ENCODE measurements at regions of chr20 and their contacts with region 1.

Region 1: GRCh38 chr20:44586289-44586911 is 4.0 kb downstream of the PKIG start:
- DNase-seq: peak; percentile 10
- ATAC-seq: peak; percentile 39
- H3K4me3 Mint-ChIP-seq: no peak overlapping the region
- H3K27ac Mint-ChIP-seq: no peak overlapping the region
- H3K4me1 Mint-ChIP-seq: peaks cover 8% of the 10 kb centered on the region
- H3K27me3 Mint-ChIP-seq: no peaks in the 10 kb centered on the region
- CTCF ChIP-seq: no peak

Region 2: GRCh38 chr20:44153636-44154043 is 432.8 kb before region 1 on chr20:
- CTCF ChIA-PET with region 1: no interaction called
- POLR2A ChIA-PET with region 1: no interaction called
- intact Hi-C with region 1: no loop called
- DNase-seq: peak; percentile 8
- ATAC-seq: peak; percentile 64
- H3K4me3 Mint-ChIP-seq: no peak overlapping the region
- H3K27ac Mint-ChIP-seq: peak overlapping the region; percentile 35
- H3K4me1 Mint-ChIP-seq: peaks cover 12% of the 10 kb centered on the region
- H3K27me3 Mint-ChIP-seq: peaks cover 3% of the 10 kb centered on the region
- CTCF ChIP-seq: no peak

Region 3: GRCh38 chr20:44532259-44532980 is 54.0 kb before region 1 on chr20:
- CTCF ChIA-PET with region 1: no interaction called
- POLR2A ChIA-PET with region 1: no interaction called
- intact Hi-C with region 1: no loop called
- DNase-seq: no peak
- ATAC-seq: no peak
- H3K4me3 Mint-ChIP-seq: no peak overlapping the region
- H3K27ac Mint-ChIP-seq: no peak overlapping the region
- H3K4me1 Mint-ChIP-seq: peaks cover 4% of the 10 kb centered on the region
- H3K27me3 Mint-ChIP-seq: no peaks in the 10 kb centered on the region
- CTCF ChIP-seq: no peak

Region 4: DNA sequence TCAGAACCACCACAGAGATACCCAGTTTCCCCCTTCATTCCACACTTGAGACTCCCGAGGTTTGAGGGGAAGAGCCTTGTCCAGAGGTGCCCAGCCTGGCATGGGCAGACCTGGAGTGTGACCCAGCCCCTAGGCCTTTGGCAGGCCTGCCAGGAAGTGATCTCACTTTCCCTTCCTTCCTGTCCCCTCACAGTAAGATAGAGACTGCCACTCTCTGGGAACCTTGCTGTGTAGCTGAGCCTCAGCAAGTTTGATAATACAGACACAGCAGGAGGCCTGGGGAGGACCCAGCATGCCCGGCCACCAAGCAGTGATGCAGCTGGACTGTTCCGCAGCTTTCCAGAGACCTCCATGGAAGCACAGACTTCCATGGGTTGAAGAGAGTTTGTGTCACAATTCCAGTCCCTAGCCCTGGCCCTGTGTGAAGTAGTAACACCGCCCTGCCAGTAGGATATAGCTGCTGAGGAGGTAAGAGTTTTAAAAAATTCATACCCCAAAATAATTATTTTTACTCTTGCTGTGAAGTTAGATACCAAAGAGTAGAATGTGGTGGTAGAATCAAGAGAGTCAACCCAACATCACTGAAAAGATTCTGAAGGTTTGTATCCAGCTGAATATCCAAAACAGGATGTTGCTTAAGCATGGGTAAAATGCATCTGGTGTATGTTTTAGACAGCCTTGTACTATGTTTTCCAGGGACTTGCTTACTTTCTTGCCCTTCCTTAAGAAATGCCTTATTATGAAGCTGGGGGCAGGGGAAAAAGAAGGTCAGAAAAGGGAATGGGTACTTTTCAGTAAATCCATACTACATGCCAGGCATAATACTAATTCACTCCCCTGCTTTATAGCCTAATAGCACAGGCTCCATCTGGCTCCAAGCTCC is 12.3 kb after region 1 on chr20:
- CTCF ChIA-PET with region 1: interaction called, 14 read pairs
- POLR2A ChIA-PET with region 1: no interaction called
- intact Hi-C with region 1: no loop called
- DNase-seq: peak; percentile 24
- ATAC-seq: peak; percentile 81
- H3K4me3 Mint-ChIP-seq: peak overlapping the region; percentile 66
- H3K27ac Mint-ChIP-seq: peak overlapping the region; percentile 80
- H3K4me1 Mint-ChIP-seq: peaks cover 15% of the 10 kb centered on the region
- H3K27me3 Mint-ChIP-seq: no peaks in the 10 kb centered on the region
- CTCF ChIP-seq: peak; percentile 36

Region 5: DNA sequence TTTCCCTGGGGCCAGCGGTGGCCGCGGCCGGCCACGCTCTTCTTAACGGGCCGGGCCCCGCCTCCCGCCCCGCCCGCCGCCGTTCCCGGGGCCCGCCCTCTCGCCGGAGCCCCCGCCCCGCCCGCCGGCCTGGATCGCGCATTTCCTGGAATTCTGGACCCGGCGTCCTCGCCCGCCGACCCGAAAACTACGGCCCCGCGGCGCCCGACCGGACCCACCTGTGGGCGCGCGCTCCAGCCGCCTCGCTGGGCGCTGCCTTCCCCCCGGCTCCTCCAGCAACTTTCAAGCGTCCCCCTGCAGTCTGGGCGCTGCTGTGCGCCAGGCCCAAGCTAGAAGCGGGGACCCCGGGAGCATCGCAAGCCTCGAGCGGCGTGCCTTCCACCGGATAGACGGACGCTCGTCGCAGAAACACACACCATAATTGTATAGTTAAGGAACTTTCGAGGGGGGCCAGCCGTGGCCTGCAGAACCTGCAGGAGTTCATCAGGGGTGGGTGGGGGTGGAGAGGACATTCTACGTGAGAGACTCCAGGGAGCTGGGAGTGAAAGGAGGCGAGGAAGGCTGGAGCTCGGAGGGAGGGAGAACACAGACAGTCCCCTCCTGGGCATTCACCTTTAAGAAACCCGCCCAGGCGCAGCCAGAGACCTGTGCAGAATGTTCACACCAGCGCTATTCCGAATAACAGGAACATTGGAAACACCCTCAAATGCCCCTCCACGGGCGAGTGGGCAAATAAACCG is 65.5 kb after region 1 on chr20 and contains the start of gene ADA:
- CTCF ChIA-PET with region 1: no interaction called
- POLR2A ChIA-PET with region 1: no interaction called
- intact Hi-C with region 1: no loop called
- DNase-seq: peak; percentile 67
- ATAC-seq: peak; percentile 60
- H3K4me3 Mint-ChIP-seq: peak within 1 kb of the TSS; percentile 75
- H3K27ac Mint-ChIP-seq: peak within 1 kb of the TSS; percentile 75
- H3K4me1 Mint-ChIP-seq: peaks cover 29% of the 10 kb centered on the region
- H3K27me3 Mint-ChIP-seq: no peaks in the 10 kb centered on the region
- CTCF ChIP-seq: no peak
- total RNA-seq, gene ADA: 32.8 to 36.7 TPM

Region 6: GRCh38 chr20:44888226-44889103 is 302.1 kb after region 1 on chr20:
- CTCF ChIA-PET with region 1: no interaction called
- POLR2A ChIA-PET with region 1: no interaction called
- intact Hi-C with region 1: no loop called
- DNase-seq: no peak
- ATAC-seq: no peak
- H3K4me3 Mint-ChIP-seq: peak overlapping the region; percentile 90
- H3K27ac Mint-ChIP-seq: peak overlapping the region; percentile 68
- H3K4me1 Mint-ChIP-seq: peaks cover 63% of the 10 kb centered on the region
- H3K27me3 Mint-ChIP-seq: no peaks in the 10 kb centered on the region
- CTCF ChIP-seq: peak; percentile 43